ENCODE measurements at regions of chr2 and their contacts with region 1.

Region 1: GRCh38 chr2:182302174-182302573 is 124.7 kb downstream of the PDE1A start:
- DNase-seq: peak; percentile 80
- H3K4me3 ChIP-seq: no peak overlapping the region
- CTCF ChIP-seq: no peak

Region 2: DNA sequence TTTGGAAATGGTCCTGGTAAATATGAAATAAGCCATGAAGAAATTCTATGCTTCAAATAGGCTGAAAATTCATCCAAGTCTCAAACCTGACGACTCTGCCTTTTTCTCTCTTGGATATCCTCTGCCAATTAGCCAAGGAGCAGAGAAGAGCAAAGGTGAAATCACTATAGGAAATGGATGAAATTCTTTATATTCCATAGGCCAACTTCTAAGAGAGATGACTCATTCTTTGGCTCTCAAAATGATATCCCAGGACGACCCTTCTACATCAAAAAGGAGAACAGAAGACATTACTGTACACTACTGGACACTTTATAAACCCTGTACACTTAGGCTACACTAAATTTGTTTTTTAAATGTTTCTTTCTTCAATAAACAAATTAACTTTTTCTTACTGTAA is 101.9 kb after region 1 on chr2:
- in situ Hi-C with region 1: loop called (anchors 25 kb)
- DNase-seq: peak; percentile 45
- H3K4me3 ChIP-seq: no peak overlapping the region
- CTCF ChIP-seq: no peak

Region 3: GRCh38 chr2:182581196-182581935 is 279.2 kb after region 1 on chr2:
- in situ Hi-C with region 1: no loop called
- DNase-seq: no peak
- H3K4me3 ChIP-seq: no peak overlapping the region
- CTCF ChIP-seq: no peak